CD8-positive, alpha-beta T cell (primary cell): ENCODE measurements at regions of chr3 and their contacts with region 1.

Region 1: DNA sequence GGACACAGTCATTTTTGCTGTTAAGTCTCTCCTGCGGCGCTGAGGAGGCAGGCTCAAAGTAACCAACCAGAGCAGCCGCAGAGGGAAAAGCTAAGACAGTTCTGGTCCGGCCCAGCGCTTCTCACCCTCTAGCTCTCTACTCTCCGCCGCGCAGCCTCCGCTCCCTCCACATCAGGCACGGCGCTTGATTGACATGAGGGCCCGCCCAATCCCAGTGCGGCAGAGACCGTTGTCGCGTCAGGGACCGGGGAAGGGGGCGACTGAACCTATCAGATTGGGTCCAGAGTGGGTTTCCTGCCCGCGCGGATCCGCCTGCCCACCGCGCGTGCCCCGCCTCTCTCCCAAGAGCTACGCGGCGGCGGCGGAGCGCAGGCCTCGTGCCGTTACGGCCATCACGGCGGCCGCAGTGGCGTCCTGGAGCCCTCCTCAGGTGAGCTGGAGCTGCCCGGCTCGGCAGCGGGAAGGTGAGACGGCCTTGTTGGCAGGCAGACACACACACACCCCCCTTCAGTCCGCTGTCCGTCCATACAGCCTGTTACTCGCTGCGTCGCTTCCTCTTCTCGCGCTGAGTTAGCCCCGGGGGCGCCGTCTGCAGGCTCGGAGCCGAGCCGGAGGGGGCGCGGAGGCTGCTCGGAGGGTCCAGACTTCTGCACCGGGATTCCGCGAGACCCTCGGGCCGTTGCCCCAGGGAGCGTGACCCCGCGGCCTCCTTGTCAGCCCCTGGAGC is at the start of gene NCK1:
- DNase-seq: peak; percentile 97 to 100 (median 99)
- ATAC-seq: peak; percentile 93
- H3K4me3 ChIP-seq: peak within 1 kb of the TSS; percentile 76 to 92
- H3K4me3 Mint-ChIP-seq: peak within 1 kb of the TSS; percentile 90
- H3K27ac ChIP-seq: peak within 1 kb of the TSS; percentile 86 to 96
- H3K27ac Mint-ChIP-seq: peak within 1 kb of the TSS; percentile 98
- H3K4me1 ChIP-seq: peaks cover 23% of the 10 kb centered on the region
- H3K4me1 Mint-ChIP-seq: peaks cover 63% of the 10 kb centered on the region
- H3K27me3 ChIP-seq: no peaks in the 10 kb centered on the region
- H3K27me3 Mint-ChIP-seq: no peaks in the 10 kb centered on the region
- CTCF ChIP-seq: no peak
- total RNA-seq, gene NCK1: 54.8 to 68.7 TPM

Region 2: DNA sequence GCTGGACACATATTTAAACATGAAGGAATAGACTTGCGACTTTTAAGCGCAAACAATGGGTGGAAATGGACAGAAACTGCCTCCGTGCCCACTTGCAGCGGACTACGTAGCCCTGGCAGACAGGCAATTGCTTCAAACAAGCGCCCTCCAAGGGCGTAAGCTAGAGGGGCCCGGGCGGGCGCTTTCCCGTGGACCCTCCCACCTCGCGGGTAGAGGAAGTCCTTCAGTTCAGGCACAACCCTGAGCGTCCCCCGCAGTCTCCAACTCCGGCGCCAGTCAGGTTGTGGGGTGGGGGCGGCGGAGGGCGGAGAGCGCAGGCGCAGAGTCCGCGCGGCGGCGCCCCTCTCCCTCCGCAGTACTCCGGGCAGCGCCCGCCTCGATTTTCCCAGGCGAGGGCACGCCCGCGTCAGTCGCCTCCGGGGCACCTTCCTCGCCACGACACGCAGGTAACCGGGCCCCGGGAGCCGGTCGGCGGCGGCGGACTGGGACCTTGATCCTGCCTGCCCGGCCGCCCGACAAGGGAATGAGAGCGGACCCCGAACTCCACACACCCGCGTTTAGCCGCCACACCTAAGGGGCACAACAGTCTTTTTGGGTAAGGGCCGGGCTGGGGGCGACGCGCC is 43.2 kb before region 1 on chr3 and contains the start of gene SLC35G2:
- CTCF ChIA-PET with region 1: no interaction called
- POLR2A ChIA-PET with region 1: interaction called, 3 read pairs
- intact Hi-C with region 1: loop called in 1 of 2 experiments (anchors 2 kb)
- DNase-seq: peak in 7 of 9 experiments; percentile 6 to 60 (median 37)
- ATAC-seq: peak; percentile 74
- H3K4me3 ChIP-seq: peak within 1 kb of the TSS; percentile 55 to 63
- H3K4me3 Mint-ChIP-seq: peak within 1 kb of the TSS; percentile 86
- H3K27ac ChIP-seq: peak within 1 kb of the TSS in 1 of 2 experiments; percentile 30
- H3K27ac Mint-ChIP-seq: peak within 1 kb of the TSS; percentile 57
- H3K4me1 ChIP-seq: peaks cover 11% of the 10 kb centered on the region
- H3K4me1 Mint-ChIP-seq: peaks cover 22% of the 10 kb centered on the region
- H3K27me3 ChIP-seq: peaks cover 5 to 13% of the 10 kb centered on the region in 2 experiments
- H3K27me3 Mint-ChIP-seq: peaks cover 40% of the 10 kb centered on the region
- CTCF ChIP-seq: no peak
- total RNA-seq, gene SLC35G2: 0.24 TPM in 1 of 2 experiments, not detected in the other

Region 3: GRCh38 chr3:136835089-136835816 is 26.8 kb before region 1 on chr3:
- CTCF ChIA-PET with region 1: no interaction called
- POLR2A ChIA-PET with region 1: no interaction called
- intact Hi-C with region 1: no loop called
- DNase-seq: no peak
- ATAC-seq: no peak
- H3K4me3 ChIP-seq: no peak overlapping the region
- H3K4me3 Mint-ChIP-seq: no peak overlapping the region
- H3K27ac ChIP-seq: no peak overlapping the region
- H3K27ac Mint-ChIP-seq: no peak overlapping the region
- H3K4me1 ChIP-seq: no peaks in the 10 kb centered on the region
- H3K4me1 Mint-ChIP-seq: peaks cover 3% of the 10 kb centered on the region
- H3K27me3 ChIP-seq: no peaks in the 10 kb centered on the region
- H3K27me3 Mint-ChIP-seq: peaks cover 13% of the 10 kb centered on the region
- CTCF ChIP-seq: no peak

Region 4: GRCh38 chr3:136882572-136882971 is 20.5 kb after region 1 on chr3:
- CTCF ChIA-PET with region 1: no interaction called
- POLR2A ChIA-PET with region 1: interaction called, 32 read pairs
- intact Hi-C with region 1: loop called in 1 of 2 experiments (anchors 2 kb)
- DNase-seq: peak in 2 of 9 experiments; percentile 23 to 50
- ATAC-seq: peak; percentile 56
- H3K4me3 ChIP-seq: no peak overlapping the region
- H3K4me3 Mint-ChIP-seq: no peak overlapping the region
- H3K27ac ChIP-seq: no peak overlapping the region
- H3K27ac Mint-ChIP-seq: peak overlapping the region; percentile 60
- H3K4me1 ChIP-seq: peaks cover 51% of the 10 kb centered on the region
- H3K4me1 Mint-ChIP-seq: peaks cover 71% of the 10 kb centered on the region
- H3K27me3 ChIP-seq: no peaks in the 10 kb centered on the region
- H3K27me3 Mint-ChIP-seq: no peaks in the 10 kb centered on the region
- CTCF ChIP-seq: no peak

Region 5: DNA sequence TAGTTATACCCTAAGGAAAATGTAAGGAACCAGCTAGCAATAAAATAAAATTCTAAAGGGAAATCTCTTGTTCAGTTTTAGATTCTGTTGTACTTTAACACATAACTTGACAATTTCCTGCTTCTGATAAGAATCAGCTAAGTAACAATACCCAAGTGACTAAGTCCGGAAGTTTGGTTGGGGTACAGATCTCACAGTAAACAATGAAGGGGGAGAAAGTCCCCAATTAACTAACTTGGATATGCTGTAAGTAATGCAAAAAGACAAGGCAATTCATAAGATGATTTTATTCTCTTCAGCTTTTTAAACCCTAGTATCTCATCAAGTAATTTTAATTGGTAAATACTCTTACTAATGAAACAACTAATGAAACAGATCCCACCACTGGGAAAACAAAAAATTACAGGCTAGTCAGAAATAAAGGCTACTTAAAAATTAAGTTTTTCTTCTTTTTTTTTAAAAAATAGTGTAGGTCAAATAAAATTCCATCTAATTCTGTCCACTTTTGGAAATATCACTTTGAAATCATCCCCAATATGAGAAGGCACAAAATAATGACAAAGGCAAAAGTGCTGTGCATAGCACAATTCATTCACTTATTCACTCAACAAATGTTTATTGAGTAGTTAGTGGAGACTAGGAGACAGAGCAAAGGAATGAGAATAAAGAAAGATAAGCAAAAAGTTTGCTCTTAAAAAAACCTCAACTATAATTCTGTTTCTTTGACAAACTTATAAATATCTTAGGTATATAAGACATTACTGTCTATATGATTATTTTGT is 57.9 kb after region 1 on chr3:
- CTCF ChIA-PET with region 1: interaction called, 4 read pairs
- POLR2A ChIA-PET with region 1: interaction called, 5 read pairs
- intact Hi-C with region 1: loop called (anchors 2 to 5 kb)
- DNase-seq: peak in 3 of 9 experiments; percentile 9 to 88 (median 79)
- ATAC-seq: peak; percentile 93
- H3K4me3 ChIP-seq: no peak overlapping the region
- H3K4me3 Mint-ChIP-seq: peak overlapping the region; percentile 44
- H3K27ac ChIP-seq: peak overlapping the region in 1 of 2 experiments; percentile 90
- H3K27ac Mint-ChIP-seq: peak overlapping the region; percentile 84
- H3K4me1 ChIP-seq: peaks cover 56% of the 10 kb centered on the region
- H3K4me1 Mint-ChIP-seq: peaks cover 85% of the 10 kb centered on the region
- H3K27me3 ChIP-seq: no peaks in the 10 kb centered on the region
- H3K27me3 Mint-ChIP-seq: no peaks in the 10 kb centered on the region
- CTCF ChIP-seq: no peak